ENCODE measurements at regions of chr3 and their contacts with region 1.

Region 1: DNA sequence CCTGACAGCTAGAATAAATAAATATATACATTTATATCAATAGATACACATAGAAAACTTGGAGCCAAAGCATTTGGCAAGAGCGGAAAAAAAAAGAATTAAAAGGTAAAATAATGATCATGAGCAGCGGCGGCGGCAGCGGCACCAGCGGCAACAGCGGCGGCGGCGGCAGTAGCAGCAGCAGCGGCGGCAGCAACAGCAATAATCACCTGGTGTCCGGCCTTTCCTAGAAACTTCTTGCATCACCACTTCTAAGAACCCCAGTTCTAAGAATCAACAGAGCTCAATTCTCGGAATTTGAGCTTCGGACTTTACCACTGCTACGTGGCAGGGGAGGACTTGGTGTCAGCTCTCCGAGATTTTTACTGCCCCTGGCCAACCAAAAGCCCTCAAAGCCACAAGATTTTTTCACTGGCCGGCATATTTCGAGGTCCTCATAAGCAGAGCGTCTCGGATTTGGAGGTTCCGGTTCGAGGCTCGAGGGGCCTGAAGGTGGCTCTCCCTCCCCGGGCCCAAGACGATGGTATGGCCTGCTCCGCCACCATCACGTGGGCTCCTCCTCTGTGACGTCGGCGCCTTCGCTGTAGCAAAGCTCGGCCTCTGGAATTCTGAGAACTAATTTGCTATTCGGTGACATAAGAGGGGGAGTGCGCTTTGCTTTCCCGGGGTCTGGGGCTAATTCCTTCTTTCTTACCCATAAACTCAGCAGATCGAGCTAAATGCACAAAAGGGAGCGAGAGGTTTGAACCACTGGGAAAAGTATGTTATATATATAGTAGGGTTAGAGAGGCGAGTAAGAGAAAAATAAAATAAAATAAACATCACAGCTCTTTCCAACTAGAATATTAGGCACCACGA is at the start of gene BCL6:
- DNase-seq: no peak
- ATAC-seq: peak; percentile 63
- H3K4me3 ChIP-seq: peak within 1 kb of the TSS; percentile 65; the same call in 1 of the 2 replicates
- H3K27ac ChIP-seq: no peak within 1 kb of the TSS
- H3K4me1 ChIP-seq: peaks cover 7% of the 10 kb centered on the region
- H3K27me3 ChIP-seq: peaks cover 14 to 21% of the 10 kb centered on the region in 2 experiments
- CTCF ChIP-seq: no peak
- EP300 ChIP-seq: no peak
- POLR2A ChIP-seq: 0 out of 2 replicates have a peak, but pooled peaks have one; percentile 16
- RAD21 ChIP-seq: no peak
- polyA plus RNA-seq, gene BCL6: 0.04 to 0.06 TPM

Region 2: GRCh38 chr3:187770224-187770623 is 24.8 kb after region 1 on chr3:
- CTCF ChIA-PET with region 1: interaction called, 10 read pairs
- POLR2A ChIA-PET with region 1: no interaction called
- RAD21 ChIA-PET with region 1: interaction called, 11 read pairs
- SMC1A ChIA-PET with region 1: interaction called, 9 read pairs
- in situ Hi-C with region 1: no loop called
- intact Hi-C with region 1: no loop called
- DNase-seq: peak; percentile 61
- ATAC-seq: peak; percentile 81
- H3K4me3 ChIP-seq: no peak overlapping the region
- H3K27ac ChIP-seq: peak overlapping the region; percentile 6; the same call in 1 of the 2 replicates
- H3K4me1 ChIP-seq: peaks cover 27% of the 10 kb centered on the region
- H3K27me3 ChIP-seq: no peaks in the 10 kb centered on the region
- CTCF ChIP-seq: no peak
- EP300 ChIP-seq: peak; percentile 87 to 96
- POLR2A ChIP-seq: no peak
- RAD21 ChIP-seq: no peak

Region 3: GRCh38 chr3:187811585-187812250 is 66.3 kb after region 1 on chr3:
- CTCF ChIA-PET with region 1: interaction called, 8 read pairs
- POLR2A ChIA-PET with region 1: no interaction called
- RAD21 ChIA-PET with region 1: interaction called, 3 read pairs
- SMC1A ChIA-PET with region 1: interaction called, 14 read pairs
- in situ Hi-C with region 1: no loop called
- intact Hi-C with region 1: no loop called
- DNase-seq: no peak
- ATAC-seq: no peak; the same call in 2 of the 3 replicates
- H3K4me3 ChIP-seq: no peak overlapping the region
- H3K27ac ChIP-seq: no peak overlapping the region
- H3K4me1 ChIP-seq: no peaks in the 10 kb centered on the region
- H3K27me3 ChIP-seq: peaks cover 0 to 4% of the 10 kb centered on the region in 2 experiments; a peak in 1 of 4 replicates
- CTCF ChIP-seq: no peak
- EP300 ChIP-seq: no peak
- POLR2A ChIP-seq: no peak
- RAD21 ChIP-seq: no peak

Region 4: DNA sequence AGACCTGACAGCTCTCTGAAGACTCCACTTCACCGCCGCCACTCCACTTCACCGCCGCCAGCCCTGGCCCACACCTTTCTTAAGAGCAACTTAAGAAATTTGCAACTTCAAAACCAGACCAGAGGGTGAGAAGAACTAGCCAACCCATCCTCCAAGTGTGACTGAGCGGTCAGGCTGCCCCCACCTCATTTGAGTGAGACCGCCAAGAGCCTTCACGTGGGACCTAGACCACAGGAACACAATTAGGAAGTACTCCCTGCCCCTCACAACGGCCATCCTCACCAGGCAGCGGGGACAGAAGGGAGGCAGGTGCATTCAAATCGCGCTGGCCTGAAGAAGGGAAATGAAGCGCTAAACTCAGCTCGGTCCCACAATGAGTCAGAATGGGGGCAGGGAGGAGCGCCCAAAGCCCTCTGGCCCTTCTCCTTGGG is 156.6 kb after region 1 on chr3:
- CTCF ChIA-PET with region 1: interaction called, 3 read pairs
- POLR2A ChIA-PET with region 1: no interaction called
- RAD21 ChIA-PET with region 1: interaction called, 4 read pairs
- SMC1A ChIA-PET with region 1: interaction called, 11 read pairs
- in situ Hi-C with region 1: no loop called
- intact Hi-C with region 1: loop called (anchors 5 kb)
- DNase-seq: peak; percentile 5
- ATAC-seq: peak; percentile 82
- H3K4me3 ChIP-seq: no peak overlapping the region
- H3K27ac ChIP-seq: no peak overlapping the region
- H3K4me1 ChIP-seq: peaks cover 16% of the 10 kb centered on the region
- H3K27me3 ChIP-seq: peaks cover 4 to 25% of the 10 kb centered on the region in 2 experiments
- CTCF ChIP-seq: no peak
- EP300 ChIP-seq: peak in 1 of 2 experiments; percentile 46; a peak in 1 of 4 replicates
- POLR2A ChIP-seq: no peak
- RAD21 ChIP-seq: 0 out of 2 replicates have a peak, but pooled peaks have one; percentile 3

Region 5: GRCh38 chr3:187974871-187975271 is 229.4 kb after region 1 on chr3:
- CTCF ChIA-PET with region 1: interaction called, 10 read pairs
- POLR2A ChIA-PET with region 1: no interaction called
- RAD21 ChIA-PET with region 1: interaction called, 3 read pairs
- SMC1A ChIA-PET with region 1: interaction called, 9 read pairs
- in situ Hi-C with region 1: no loop called
- intact Hi-C with region 1: loop called (anchors 10 kb)
- DNase-seq: no peak
- ATAC-seq: peak; percentile 55
- H3K4me3 ChIP-seq: peak overlapping the region; percentile 16
- H3K27ac ChIP-seq: no peak overlapping the region
- H3K4me1 ChIP-seq: peaks cover 14% of the 10 kb centered on the region
- H3K27me3 ChIP-seq: peaks cover 2 to 4% of the 10 kb centered on the region in 2 experiments; a peak in 3 of 4 replicates
- CTCF ChIP-seq: no peak; a peak in 1 of 6 replicates
- EP300 ChIP-seq: no peak
- POLR2A ChIP-seq: no peak
- RAD21 ChIP-seq: no peak

Region 6: DNA sequence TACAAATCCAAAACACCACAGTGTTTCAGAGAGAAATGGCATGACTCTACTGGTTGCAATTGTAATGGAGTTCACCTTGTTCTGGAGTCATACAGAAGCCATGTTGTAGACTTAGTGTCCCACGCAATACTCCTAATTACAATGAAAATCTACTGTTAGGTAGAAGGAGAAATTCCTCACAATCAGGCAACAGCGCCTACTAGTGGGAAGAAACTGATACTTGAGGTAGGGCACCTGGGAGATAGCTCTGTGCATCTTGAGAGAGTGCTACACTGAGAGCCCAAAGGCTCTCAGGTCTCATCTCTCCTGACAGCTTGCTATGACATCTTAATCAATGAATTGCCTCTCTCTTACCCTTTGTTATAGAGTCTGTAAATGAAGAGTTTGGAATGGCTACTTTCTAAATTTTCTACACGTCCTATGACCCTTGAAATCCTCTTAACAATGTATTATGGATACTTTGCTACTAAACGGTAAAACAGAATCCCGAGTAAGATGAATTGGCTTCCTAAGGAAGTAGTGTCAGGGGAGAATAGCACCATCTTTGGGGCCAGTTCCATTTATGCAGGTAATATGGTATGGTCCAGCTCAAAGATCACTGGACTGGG is 1003.7 kb after region 1 on chr3:
- CTCF ChIA-PET with region 1: interaction called, 105 read pairs
- POLR2A ChIA-PET with region 1: no interaction called
- RAD21 ChIA-PET with region 1: interaction called, 29 read pairs
- SMC1A ChIA-PET with region 1: interaction called, 28 read pairs
- in situ Hi-C with region 1: loop called (anchors 5 kb)
- intact Hi-C with region 1: loop called (anchors 2 kb)
- DNase-seq: no peak
- ATAC-seq: peak; percentile 77
- H3K4me3 ChIP-seq: no peak overlapping the region
- H3K27ac ChIP-seq: no peak overlapping the region
- H3K4me1 ChIP-seq: peaks cover 12% of the 10 kb centered on the region
- H3K27me3 ChIP-seq: peaks cover 0 to 6% of the 10 kb centered on the region in 2 experiments; a peak in 1 of 4 replicates
- CTCF ChIP-seq: peak; percentile 70 to 89 (median 88)
- EP300 ChIP-seq: no peak
- POLR2A ChIP-seq: no peak
- RAD21 ChIP-seq: peak; percentile 69

Measured in GM12878 (cell line).